CD8-positive, alpha-beta T cell (primary cell): ENCODE measurements at regions of chr2 and their contacts with region 1.

Region 1: DNA sequence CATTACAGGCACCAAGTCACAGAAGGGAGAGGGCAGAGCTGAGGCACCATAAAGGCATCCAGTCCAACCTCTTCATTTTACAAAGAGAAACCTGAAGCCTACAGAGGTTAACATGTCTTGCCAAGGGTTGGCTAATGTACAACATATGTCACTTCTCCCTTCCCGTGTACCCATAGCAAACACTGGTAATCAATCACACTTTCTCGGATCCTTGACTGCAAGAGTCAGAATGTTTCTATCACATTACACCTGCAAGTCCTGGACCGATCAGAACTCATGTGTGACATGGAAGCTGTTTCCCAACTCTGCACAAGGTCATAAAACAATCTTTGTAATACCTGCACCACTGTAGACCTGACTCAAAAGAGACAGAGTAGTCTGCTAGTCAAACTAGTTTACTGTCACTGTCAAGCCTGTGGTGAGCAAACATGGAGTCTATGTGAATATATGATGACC is 6.0 kb downstream of the ANKRD44 start:
- DNase-seq: peak in 2 of 9 experiments; percentile 33 to 50
- ATAC-seq: peak; percentile 18
- H3K4me3 ChIP-seq: peak overlapping the region; percentile 15 to 24
- H3K4me3 Mint-ChIP-seq: peak overlapping the region; percentile 92
- H3K27ac ChIP-seq: peak overlapping the region; percentile 20 to 88
- H3K27ac Mint-ChIP-seq: peak overlapping the region; percentile 94
- H3K4me1 ChIP-seq: peaks cover 86% of the 10 kb centered on the region
- H3K4me1 Mint-ChIP-seq: peaks cover 89% of the 10 kb centered on the region
- H3K27me3 ChIP-seq: no peaks in the 10 kb centered on the region
- H3K27me3 Mint-ChIP-seq: no peaks in the 10 kb centered on the region
- CTCF ChIP-seq: no peak

Region 2: DNA sequence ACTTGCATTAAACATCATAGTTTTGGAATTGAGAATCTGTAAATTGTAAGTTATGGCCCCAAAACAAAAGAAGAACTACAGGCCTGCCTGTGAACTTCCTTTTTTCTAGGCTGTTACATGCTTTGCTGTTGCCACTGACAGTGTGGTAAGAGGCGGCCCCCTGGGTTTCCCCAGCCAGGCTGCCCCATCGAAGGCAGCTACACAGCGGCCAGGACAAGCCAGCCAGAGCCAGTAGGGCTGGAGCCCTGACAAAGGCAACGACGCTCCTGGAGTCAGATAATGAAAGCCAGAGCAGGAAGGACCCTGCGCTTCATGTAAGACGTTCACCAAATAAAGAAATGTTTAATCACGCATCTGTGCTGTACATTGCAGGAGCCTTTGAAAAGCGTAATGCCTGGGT is 49.0 kb before region 1 on chr2:
- CTCF ChIA-PET with region 1: interaction called, 11 read pairs
- POLR2A ChIA-PET with region 1: interaction called, 17 read pairs
- intact Hi-C with region 1: loop called in 1 of 2 experiments (anchors 5 kb)
- DNase-seq: peak; percentile 45 to 92 (median 72)
- ATAC-seq: peak; percentile 79
- H3K4me3 ChIP-seq: peak overlapping the region; percentile 9 to 38
- H3K4me3 Mint-ChIP-seq: peak overlapping the region; percentile 74
- H3K27ac ChIP-seq: peak overlapping the region; percentile 46 to 70
- H3K27ac Mint-ChIP-seq: peak overlapping the region; percentile 95
- H3K4me1 ChIP-seq: peaks cover 83% of the 10 kb centered on the region
- H3K4me1 Mint-ChIP-seq: peaks cover 82% of the 10 kb centered on the region
- H3K27me3 ChIP-seq: no peaks in the 10 kb centered on the region
- H3K27me3 Mint-ChIP-seq: no peaks in the 10 kb centered on the region
- CTCF ChIP-seq: no peak

Region 3: GRCh38 chr2:197293252-197294007 is 11.2 kb before region 1 on chr2:
- CTCF ChIA-PET with region 1: interaction called, 7 read pairs
- POLR2A ChIA-PET with region 1: interaction called, 71 read pairs
- intact Hi-C with region 1: loop called (anchors 1 to 2 kb)
- DNase-seq: peak in 5 of 9 experiments; percentile 37 to 73 (median 51)
- ATAC-seq: peak; percentile 70
- H3K4me3 ChIP-seq: peak overlapping the region; percentile 11 to 18
- H3K4me3 Mint-ChIP-seq: peak overlapping the region; percentile 73
- H3K27ac ChIP-seq: peak overlapping the region; percentile 41 to 88
- H3K27ac Mint-ChIP-seq: peak overlapping the region; percentile 94
- H3K4me1 ChIP-seq: peaks cover 97% of the 10 kb centered on the region
- H3K4me1 Mint-ChIP-seq: peaks cover 86% of the 10 kb centered on the region
- H3K27me3 ChIP-seq: no peaks in the 10 kb centered on the region
- H3K27me3 Mint-ChIP-seq: no peaks in the 10 kb centered on the region
- CTCF ChIP-seq: no peak

Region 4: DNA sequence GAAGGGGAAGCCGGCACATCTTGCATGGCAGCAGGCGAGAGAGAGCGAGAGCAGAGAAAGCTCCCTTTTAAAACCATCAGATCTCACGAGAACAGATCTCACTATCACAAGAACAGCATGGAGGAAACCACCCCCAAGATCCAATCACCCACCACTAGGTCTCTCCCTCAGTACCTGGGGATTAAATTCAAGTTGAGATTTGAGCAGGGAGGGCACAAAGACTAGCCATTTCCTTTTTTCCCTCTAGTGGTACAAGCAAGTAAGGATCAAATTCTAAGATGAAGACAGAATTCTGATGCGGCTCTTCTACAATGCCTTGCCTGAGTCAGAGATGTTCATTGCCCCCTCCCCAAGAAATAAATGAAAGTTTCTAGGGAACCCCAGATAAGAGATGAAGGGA is 51.6 kb after region 1 on chr2:
- CTCF ChIA-PET with region 1: no interaction called
- POLR2A ChIA-PET with region 1: no interaction called
- intact Hi-C with region 1: no loop called
- DNase-seq: peak in 2 of 9 experiments; percentile 33 to 47
- ATAC-seq: peak; percentile 62
- H3K4me3 ChIP-seq: no peak overlapping the region
- H3K4me3 Mint-ChIP-seq: no peak overlapping the region
- H3K27ac ChIP-seq: no peak overlapping the region
- H3K27ac Mint-ChIP-seq: peak overlapping the region; percentile 28
- H3K4me1 ChIP-seq: peaks cover 15% of the 10 kb centered on the region
- H3K4me1 Mint-ChIP-seq: peaks cover 23% of the 10 kb centered on the region
- H3K27me3 ChIP-seq: no peaks in the 10 kb centered on the region
- H3K27me3 Mint-ChIP-seq: no peaks in the 10 kb centered on the region
- CTCF ChIP-seq: peak; percentile 50

Region 5: GRCh38 chr2:197728338-197729207 is 424.0 kb after region 1 on chr2:
- CTCF ChIA-PET with region 1: no interaction called
- POLR2A ChIA-PET with region 1: no interaction called
- intact Hi-C with region 1: no loop called
- DNase-seq: no peak
- ATAC-seq: no peak
- H3K4me3 ChIP-seq: no peak overlapping the region
- H3K4me3 Mint-ChIP-seq: no peak overlapping the region
- H3K27ac ChIP-seq: no peak overlapping the region
- H3K27ac Mint-ChIP-seq: no peak overlapping the region
- H3K4me1 ChIP-seq: no peaks in the 10 kb centered on the region
- H3K4me1 Mint-ChIP-seq: no peaks in the 10 kb centered on the region
- H3K27me3 ChIP-seq: no peaks in the 10 kb centered on the region
- H3K27me3 Mint-ChIP-seq: no peaks in the 10 kb centered on the region
- CTCF ChIP-seq: no peak

Region 6: DNA sequence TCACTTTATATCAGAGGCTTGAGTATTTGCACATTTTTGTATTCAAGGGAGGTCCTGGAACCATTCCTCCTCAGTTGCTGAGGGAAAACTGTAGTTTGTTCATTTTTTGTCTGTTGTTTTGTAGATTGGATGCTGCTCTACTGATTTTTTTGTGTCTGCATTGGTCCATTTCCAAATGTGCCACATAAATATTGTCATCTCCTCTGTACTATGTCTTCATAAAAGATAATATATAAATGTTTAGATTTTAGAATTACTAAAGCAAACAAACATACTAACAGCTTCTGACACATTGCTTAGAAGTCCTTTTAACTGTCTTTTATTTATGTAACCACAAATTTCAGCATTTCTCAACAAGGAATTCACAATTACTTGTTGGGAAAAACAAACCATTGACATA is 856.6 kb after region 1 on chr2:
- CTCF ChIA-PET with region 1: no interaction called
- POLR2A ChIA-PET with region 1: no interaction called
- intact Hi-C with region 1: no loop called
- DNase-seq: no peak
- ATAC-seq: no peak
- H3K4me3 ChIP-seq: no peak overlapping the region
- H3K4me3 Mint-ChIP-seq: no peak overlapping the region
- H3K27ac ChIP-seq: no peak overlapping the region
- H3K27ac Mint-ChIP-seq: no peak overlapping the region
- H3K4me1 ChIP-seq: no peaks in the 10 kb centered on the region
- H3K4me1 Mint-ChIP-seq: no peaks in the 10 kb centered on the region
- H3K27me3 ChIP-seq: no peaks in the 10 kb centered on the region
- H3K27me3 Mint-ChIP-seq: no peaks in the 10 kb centered on the region
- CTCF ChIP-seq: no peak